H1 (cell line): ENCODE measurements at regions of chr11 and their contacts with region 1.

Region 1: GRCh38 chr11:116835791-116836631 is 1.4 kb downstream of the APOA1 start:
- DNase-seq: peak; percentile 83 to 87
- H3K4me3 ChIP-seq: peak overlapping the region; percentile 42 to 64 (median 50)
- H3K27ac ChIP-seq: no peak overlapping the region
- H3K4me1 ChIP-seq: peaks cover 0 to 24% (median 4%) of the 10 kb centered on the region in 4 experiments; a peak in 6 of 7 replicates
- H3K27me3 ChIP-seq: peaks cover 0 to 7% (median 5%) of the 10 kb centered on the region in 4 experiments; a peak in 3 of 7 replicates
- CTCF ChIP-seq: peak; percentile 74 to 77 (median 76)
- EP300 ChIP-seq: no peak
- POLR2A ChIP-seq: 0 out of 3 replicates have a peak, but pooled peaks of 1 of the 2 experiments have one; percentile 52
- RAD21 ChIP-seq: peak; percentile 65 to 72

Region 2: GRCh38 chr11:116563028-116563711 is 272.8 kb before region 1 on chr11:
- CTCF ChIA-PET with region 1: no interaction called
- POLR2A ChIA-PET with region 1: no interaction called
- DNase-seq: no peak
- H3K4me3 ChIP-seq: no peak overlapping the region
- H3K27ac ChIP-seq: no peak overlapping the region
- H3K4me1 ChIP-seq: peaks cover 0 to 4% (median 3%) of the 10 kb centered on the region in 4 experiments; a peak in 2 of 7 replicates
- H3K27me3 ChIP-seq: peaks cover 0 to 5% (median 0%) of the 10 kb centered on the region in 4 experiments; a peak in 2 of 7 replicates
- CTCF ChIP-seq: no peak
- EP300 ChIP-seq: no peak
- POLR2A ChIP-seq: no peak
- RAD21 ChIP-seq: no peak

Region 3: DNA sequence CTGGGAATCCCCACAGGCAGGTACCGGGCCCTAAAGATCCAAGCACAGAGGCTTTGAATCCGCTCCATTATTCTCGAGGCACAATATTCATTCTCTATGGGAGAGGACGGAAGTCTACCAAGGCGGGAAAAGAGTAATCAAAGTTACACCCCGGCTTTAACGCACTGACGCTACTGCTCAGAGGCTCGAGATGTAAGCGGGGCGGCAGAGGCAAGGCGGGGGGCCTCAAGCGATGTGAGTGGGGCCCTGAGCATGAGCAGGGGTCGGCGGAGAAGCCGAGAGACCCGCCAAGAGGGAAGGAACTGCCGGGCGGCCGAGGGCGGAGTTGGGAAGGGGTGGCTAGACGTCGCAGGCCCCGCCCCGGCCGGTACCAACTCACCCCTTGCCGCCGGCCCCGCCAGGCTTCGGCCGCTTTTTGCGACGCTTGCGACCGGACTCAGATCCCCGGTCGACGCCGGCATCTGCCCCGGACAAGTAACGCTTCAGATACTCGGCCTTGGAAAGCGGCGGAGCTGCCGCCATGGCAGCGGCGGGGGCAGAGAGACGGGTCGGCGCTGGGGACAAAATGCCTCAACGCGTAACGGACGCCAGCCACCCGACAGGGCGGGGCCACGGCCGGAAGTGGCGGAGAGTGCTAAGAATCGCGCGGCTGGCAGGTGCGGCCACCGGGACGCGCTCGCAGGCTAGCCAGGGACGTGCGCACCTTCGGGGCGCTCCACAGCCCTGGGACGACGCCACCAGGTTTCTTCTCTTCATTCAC is 63.4 kb before region 1 on chr11 and contains the start of gene BUD13:
- CTCF ChIA-PET with region 1: no interaction called
- POLR2A ChIA-PET with region 1: no interaction called
- DNase-seq: peak; percentile 50 to 96
- H3K4me3 ChIP-seq: peak within 1 kb of the TSS; percentile 76 to 96 (median 84)
- H3K27ac ChIP-seq: peak within 1 kb of the TSS; percentile 90
- H3K4me1 ChIP-seq: peaks cover 0 to 5% (median 3%) of the 10 kb centered on the region in 4 experiments; a peak in 2 of 7 replicates
- H3K27me3 ChIP-seq: no peaks in the 10 kb centered on the region
- CTCF ChIP-seq: no peak
- EP300 ChIP-seq: peak; percentile 26 to 40; a peak in 1 of 3 replicates
- POLR2A ChIP-seq: peak; percentile 20 to 96
- RAD21 ChIP-seq: no peak
- total RNA-seq, gene BUD13: 24.8 TPM in 2 replicates

Region 4: DNA sequence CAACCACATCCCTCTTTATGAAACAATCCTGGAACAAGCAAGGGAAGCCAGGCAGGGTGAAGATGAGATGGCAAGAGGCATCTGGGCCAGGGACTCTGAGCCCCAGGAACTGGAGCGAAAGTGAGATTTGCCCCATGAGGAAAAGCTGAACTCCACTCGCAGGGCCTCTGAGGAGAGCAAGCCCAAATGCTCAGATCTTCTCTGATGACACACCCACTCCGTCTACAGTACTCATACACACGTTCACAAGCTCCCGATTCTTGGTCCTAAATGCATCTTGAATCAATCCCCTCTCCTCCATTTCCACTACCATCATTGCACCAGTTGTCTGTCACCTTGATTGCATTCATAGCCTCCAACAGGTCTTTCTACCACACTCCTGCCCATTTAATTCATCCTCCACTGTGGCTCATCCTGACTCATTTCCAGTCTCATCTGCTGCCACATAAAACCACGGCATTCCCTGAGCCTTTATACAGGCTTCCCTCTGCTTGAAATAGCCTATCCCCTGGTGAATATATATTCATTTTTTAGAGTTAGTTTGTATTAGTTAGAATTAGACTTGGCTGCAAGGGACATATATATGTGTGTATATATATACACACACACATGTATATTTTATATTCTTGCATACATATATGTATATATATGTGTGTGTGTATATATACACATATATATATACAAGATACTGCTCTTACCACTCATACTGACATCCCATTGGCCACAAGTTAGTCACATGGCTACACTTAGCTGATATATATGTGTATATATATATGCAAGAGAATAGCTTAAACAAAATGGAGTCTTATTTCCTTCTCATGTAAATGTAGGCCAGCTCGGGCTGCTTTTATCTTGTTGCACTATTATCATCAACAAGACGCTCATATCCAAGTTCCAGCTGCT is 42.9 kb before region 1 on chr11:
- CTCF ChIA-PET with region 1: interaction called, 237 read pairs
- POLR2A ChIA-PET with region 1: interaction called, 16 read pairs
- DNase-seq: no peak
- H3K4me3 ChIP-seq: no peak overlapping the region
- H3K27ac ChIP-seq: no peak overlapping the region
- H3K4me1 ChIP-seq: peaks cover 4 to 7% (median 5%) of the 10 kb centered on the region in 4 experiments
- H3K27me3 ChIP-seq: peaks cover 0 to 11% (median 3%) of the 10 kb centered on the region in 4 experiments; a peak in 4 of 7 replicates
- CTCF ChIP-seq: no peak
- EP300 ChIP-seq: no peak
- POLR2A ChIP-seq: no peak
- RAD21 ChIP-seq: no peak

Region 5: GRCh38 chr11:116821050-116821918 is 14.7 kb before region 1 on chr11:
- CTCF ChIA-PET with region 1: interaction called, 55 read pairs
- POLR2A ChIA-PET with region 1: interaction called, 3 read pairs
- DNase-seq: no peak
- H3K4me3 ChIP-seq: no peak overlapping the region
- H3K27ac ChIP-seq: no peak overlapping the region
- H3K4me1 ChIP-seq: no peaks in the 10 kb centered on the region
- H3K27me3 ChIP-seq: no peaks in the 10 kb centered on the region
- CTCF ChIP-seq: no peak
- EP300 ChIP-seq: no peak
- POLR2A ChIP-seq: no peak
- RAD21 ChIP-seq: no peak

Region 6: GRCh38 chr11:116853461-116854073 is 17.6 kb after region 1 on chr11:
- CTCF ChIA-PET with region 1: interaction called, 17 read pairs
- POLR2A ChIA-PET with region 1: interaction called, 4 read pairs
- DNase-seq: no peak
- H3K4me3 ChIP-seq: no peak overlapping the region
- H3K27ac ChIP-seq: no peak overlapping the region
- H3K4me1 ChIP-seq: no peaks in the 10 kb centered on the region
- H3K27me3 ChIP-seq: no peaks in the 10 kb centered on the region
- CTCF ChIP-seq: no peak
- EP300 ChIP-seq: no peak
- POLR2A ChIP-seq: no peak
- RAD21 ChIP-seq: no peak

Region 7: GRCh38 chr11:116980136-116980793 is 144.3 kb after region 1 on chr11:
- CTCF ChIA-PET with region 1: no interaction called
- POLR2A ChIA-PET with region 1: no interaction called
- DNase-seq: no peak
- H3K4me3 ChIP-seq: no peak overlapping the region
- H3K27ac ChIP-seq: no peak overlapping the region
- H3K4me1 ChIP-seq: peaks cover 0 to 2% (median under 1%) of the 10 kb centered on the region in 4 experiments; a peak in 2 of 7 replicates
- H3K27me3 ChIP-seq: no peaks in the 10 kb centered on the region
- CTCF ChIP-seq: no peak
- EP300 ChIP-seq: no peak
- POLR2A ChIP-seq: no peak
- RAD21 ChIP-seq: no peak

Region 8: GRCh38 chr11:117226388-117227385 is 390.7 kb after region 1 on chr11:
- CTCF ChIA-PET with region 1: interaction called, 11 read pairs
- POLR2A ChIA-PET with region 1: no interaction called
- DNase-seq: no peak
- H3K4me3 ChIP-seq: no peak overlapping the region
- H3K27ac ChIP-seq: no peak overlapping the region
- H3K4me1 ChIP-seq: peaks cover 0 to 6% (median under 1%) of the 10 kb centered on the region in 4 experiments; a peak in 2 of 7 replicates
- H3K27me3 ChIP-seq: no peaks in the 10 kb centered on the region
- CTCF ChIP-seq: peak; percentile 1 to 92 (median 78)
- EP300 ChIP-seq: no peak
- POLR2A ChIP-seq: no peak
- RAD21 ChIP-seq: peak; percentile 94